Activated T-helper 1 cell treated with anti-CD3 and anti-CD28 coated beads, Interleukin-12 subunit alpha, Interleukin-12 subunit beta, Interleukin-2, Interleukin-4 antibody, amounts not matched to agents 30 ng/mL and 10 ng/mL and 1 ng/mL, durations not matched to agents 14 hours and 24 hours and 36 hours (primary cell): ENCODE measurements at regions of chr10 and their contacts with region 1.

Region 1: GRCh38 chr10:104121520-104122224 is at the start of gene SFR1:
- DNase-seq: peak; percentile 99
- H3K4me3 Mint-ChIP-seq: peak within 1 kb of the TSS; percentile 94
- H3K27ac Mint-ChIP-seq: peak within 1 kb of the TSS; percentile 99
- H3K4me1 Mint-ChIP-seq: peaks cover 44% of the 10 kb centered on the region
- H3K27me3 Mint-ChIP-seq: peaks cover 10% of the 10 kb centered on the region
- total RNA-seq, gene SFR1: 13.8 and 14.0 TPM in 2 replicates

Region 2: GRCh38 chr10:102743588-102744373 is 1377.9 kb before region 1 on chr10 and contains the start of gene WBP1L:
- intact Hi-C with region 1: loop called (anchors 10 kb)
- DNase-seq: peak; percentile 94
- H3K4me3 Mint-ChIP-seq: peak within 1 kb of the TSS; percentile 92
- H3K27ac Mint-ChIP-seq: peak within 1 kb of the TSS; percentile 93
- H3K4me1 Mint-ChIP-seq: peaks cover 46% of the 10 kb centered on the region
- H3K27me3 Mint-ChIP-seq: peaks cover 1% of the 10 kb centered on the region
- total RNA-seq, gene WBP1L: 19.4 and 20.0 TPM in 2 replicates

Region 3: GRCh38 chr10:103759100-103759781 is 362.4 kb before region 1 on chr10:
- intact Hi-C with region 1: loop called (anchors 5 kb)
- DNase-seq: peak; percentile 49
- H3K4me3 Mint-ChIP-seq: peak overlapping the region; percentile 69
- H3K27ac Mint-ChIP-seq: peak overlapping the region; percentile 92
- H3K4me1 Mint-ChIP-seq: peaks cover 66% of the 10 kb centered on the region
- H3K27me3 Mint-ChIP-seq: peaks cover 8% of the 10 kb centered on the region

Region 4: GRCh38 chr10:103833731-103834365 is 287.8 kb before region 1 on chr10:
- intact Hi-C with region 1: no loop called
- DNase-seq: no peak
- H3K4me3 Mint-ChIP-seq: no peak overlapping the region
- H3K27ac Mint-ChIP-seq: no peak overlapping the region
- H3K4me1 Mint-ChIP-seq: no peaks in the 10 kb centered on the region
- H3K27me3 Mint-ChIP-seq: peaks cover 9% of the 10 kb centered on the region

Region 5: GRCh38 chr10:103911021-103911459 is 210.6 kb before region 1 on chr10:
- intact Hi-C with region 1: loop called (anchors 2 kb)
- DNase-seq: peak; percentile 54
- H3K4me3 Mint-ChIP-seq: peak overlapping the region; percentile 68
- H3K27ac Mint-ChIP-seq: peak overlapping the region; percentile 90
- H3K4me1 Mint-ChIP-seq: peaks cover 72% of the 10 kb centered on the region
- H3K27me3 Mint-ChIP-seq: no peaks in the 10 kb centered on the region

Region 6: GRCh38 chr10:103983367-103983911 is 138.2 kb before region 1 on chr10:
- intact Hi-C with region 1: loop called (anchors 5 kb)
- DNase-seq: peak; percentile 16
- H3K4me3 Mint-ChIP-seq: peak overlapping the region; percentile 20
- H3K27ac Mint-ChIP-seq: peak overlapping the region; percentile 67
- H3K4me1 Mint-ChIP-seq: peaks cover 62% of the 10 kb centered on the region
- H3K27me3 Mint-ChIP-seq: no peaks in the 10 kb centered on the region

Region 7: GRCh38 chr10:104268716-104269645 is 147.3 kb after region 1 on chr10 and contains the start of gene GSTO2:
- intact Hi-C with region 1: loop called (anchors 1 kb)
- DNase-seq: peak; percentile 98
- H3K4me3 Mint-ChIP-seq: peak within 1 kb of the TSS; percentile 92
- H3K27ac Mint-ChIP-seq: peak within 1 kb of the TSS; percentile 96
- H3K4me1 Mint-ChIP-seq: peaks cover 45% of the 10 kb centered on the region
- H3K27me3 Mint-ChIP-seq: peaks cover 4% of the 10 kb centered on the region
- total RNA-seq, gene GSTO2: 1.1 and 1.2 TPM in 2 replicates

Region 8: DNA sequence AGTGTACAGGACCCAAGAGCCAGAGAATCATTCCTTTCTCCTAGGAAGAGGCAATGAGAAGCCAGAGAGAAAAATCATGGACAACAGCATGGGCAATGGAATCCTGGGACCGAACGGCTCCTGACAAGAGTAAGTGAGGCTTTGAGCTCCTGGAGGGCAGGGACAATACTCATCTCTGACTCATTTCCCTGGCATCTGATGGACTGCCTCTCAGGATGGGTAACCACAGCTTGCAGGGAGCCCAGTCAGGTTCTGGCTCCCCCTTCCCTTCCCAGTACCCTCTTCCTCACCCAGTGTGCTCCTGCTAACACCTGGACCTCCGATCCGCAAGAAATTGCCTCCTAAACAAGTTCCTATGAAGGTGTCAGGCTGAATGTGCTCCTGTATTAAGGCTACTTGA is 468.2 kb after region 1 on chr10:
- intact Hi-C with region 1: no loop called
- DNase-seq: no peak
- H3K4me3 Mint-ChIP-seq: no peak overlapping the region
- H3K27ac Mint-ChIP-seq: no peak overlapping the region
- H3K4me1 Mint-ChIP-seq: no peaks in the 10 kb centered on the region
- H3K27me3 Mint-ChIP-seq: peaks cover 4% of the 10 kb centered on the region